Caki2 (cell line): ENCODE measurements at regions of chr4 and their contacts with region 1.

Region 1: GRCh38 chr4:182938205-182938645 is 21.0 kb upstream of the DCTD start:
- DNase-seq: peak; percentile 54

Region 2: DNA sequence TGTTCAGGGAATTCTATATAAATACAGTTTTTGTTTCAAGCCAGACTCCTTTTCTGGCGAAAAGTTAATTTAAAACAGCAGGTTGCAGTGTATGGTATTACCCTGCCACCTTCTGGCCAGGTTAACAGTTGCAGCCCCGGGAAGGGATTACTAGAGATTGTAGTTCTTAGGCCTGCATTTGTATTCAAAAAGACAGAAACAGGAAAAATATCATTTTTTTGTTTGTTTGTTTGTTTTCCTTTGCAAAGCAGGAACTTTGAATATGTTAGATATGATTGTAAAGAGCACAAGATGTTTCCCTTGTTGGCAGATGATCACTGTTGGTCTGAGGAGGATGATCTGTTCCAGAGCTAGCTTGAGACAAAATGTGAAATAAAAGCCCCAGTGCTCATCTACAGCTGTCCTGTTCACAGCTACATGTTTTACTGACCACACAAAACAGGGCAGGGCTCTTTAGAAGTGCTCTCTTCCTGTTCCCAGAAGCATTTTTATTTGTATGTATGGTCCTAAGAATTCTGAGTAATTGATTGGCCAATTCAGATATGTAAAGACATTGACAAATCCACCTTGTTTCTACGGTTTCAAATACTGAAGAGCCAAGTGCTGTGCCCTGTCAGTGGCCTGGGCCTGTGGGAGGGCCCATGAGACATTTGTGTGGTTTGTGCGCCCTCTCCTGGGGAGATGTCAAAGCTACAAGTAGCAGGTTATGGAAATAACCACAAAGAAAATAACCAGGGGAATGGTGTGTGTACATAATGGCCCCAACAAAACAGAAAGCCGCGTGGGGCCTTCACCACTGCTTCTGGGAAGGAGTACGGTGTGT is 323.9 kb after region 1 on chr4:
- in situ Hi-C with region 1: loop called (anchors 25 kb)
- DNase-seq: peak; percentile 69